ENCODE measurements at regions of chr4 and their contacts with region 1.

Region 1: DNA sequence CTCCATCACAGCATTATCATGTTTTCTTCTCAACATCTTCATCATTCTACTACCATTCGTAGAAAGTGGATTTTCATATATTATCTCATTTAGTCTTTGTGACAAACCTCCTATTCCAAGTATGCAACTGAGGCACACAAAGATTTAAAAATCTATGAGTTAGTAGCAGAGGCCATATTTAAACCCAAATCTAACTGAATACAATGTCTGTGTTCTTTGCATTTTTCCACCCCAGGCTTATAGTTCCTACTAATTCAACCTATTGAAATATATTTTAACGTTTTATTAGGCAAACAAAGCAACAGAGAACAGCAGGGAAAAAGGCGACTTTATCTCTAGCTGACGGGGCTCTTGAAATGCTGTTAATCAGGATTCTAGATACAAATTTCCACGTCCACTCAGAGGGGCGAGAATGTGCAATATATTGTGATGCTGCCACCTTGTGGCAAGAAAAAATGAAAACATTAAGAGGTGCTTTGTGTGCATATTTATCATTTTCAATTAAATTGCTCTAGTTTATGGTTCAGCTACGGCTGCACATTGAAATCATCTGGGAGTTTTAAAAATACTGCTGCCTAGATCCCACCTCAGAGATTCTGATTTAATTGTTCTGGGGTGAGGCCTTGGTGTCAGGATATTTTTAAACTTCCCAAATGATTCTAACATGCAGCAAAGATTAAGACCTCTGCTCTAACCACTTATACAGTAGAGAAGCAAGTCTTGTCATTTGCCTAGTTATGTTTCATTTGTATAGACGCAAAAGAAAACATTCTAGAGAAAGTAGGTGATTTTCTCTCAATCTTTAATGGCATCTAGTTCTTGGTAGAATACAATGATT is 315.9 kb downstream of the MAPK10 start:
- DNase-seq: peak; percentile 77
- H3K4me3 ChIP-seq: no peak overlapping the region
- H3K27ac ChIP-seq: no peak overlapping the region
- H3K4me1 ChIP-seq: no peaks in the 10 kb centered on the region
- H3K27me3 ChIP-seq: peaks cover 6 to 17% of the 10 kb centered on the region in 2 experiments
- CTCF ChIP-seq: peak; percentile 32 to 41
- POLR2A ChIP-seq: no peak

Region 2: GRCh38 chr4:85147439-85148076 is 896.4 kb before region 1 on chr4:
- CTCF ChIA-PET with region 1: interaction called, 14 read pairs
- POLR2A ChIA-PET with region 1: no interaction called
- dilution Hi-C with region 1: no loop called
- intact Hi-C with region 1: loop called (anchors 1 kb)
- DNase-seq: peak; percentile 66
- H3K4me3 ChIP-seq: no peak overlapping the region
- H3K27ac ChIP-seq: no peak overlapping the region
- H3K4me1 ChIP-seq: no peaks in the 10 kb centered on the region
- H3K27me3 ChIP-seq: peaks cover 12 to 32% of the 10 kb centered on the region in 2 experiments
- CTCF ChIP-seq: peak; percentile 38 to 44
- POLR2A ChIP-seq: no peak

Region 3: DNA sequence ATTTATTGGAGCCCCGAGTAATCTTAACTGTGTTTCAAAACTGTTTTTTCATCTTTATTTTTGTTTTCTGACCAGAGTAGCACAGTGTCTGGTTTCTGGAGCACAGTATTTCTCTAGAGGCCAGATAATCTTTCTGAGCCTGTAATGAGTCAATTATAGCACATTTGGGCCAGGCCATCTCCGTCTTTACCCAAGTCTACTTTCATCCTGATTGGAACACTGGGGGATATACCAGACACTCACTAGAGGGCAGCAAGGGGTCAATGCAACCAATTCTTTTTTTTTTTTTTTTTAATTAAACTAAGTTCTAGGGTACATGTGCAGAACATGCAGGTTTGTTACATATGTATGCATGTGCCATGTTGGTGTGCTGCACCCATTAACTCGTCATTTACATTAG is 287.0 kb before region 1 on chr4:
- CTCF ChIA-PET with region 1: interaction called, 8 read pairs
- POLR2A ChIA-PET with region 1: interaction called, 5 read pairs
- dilution Hi-C with region 1: no loop called
- intact Hi-C with region 1: loop called (anchors 1 kb)
- DNase-seq: peak; percentile 68
- H3K4me3 ChIP-seq: no peak overlapping the region
- H3K27ac ChIP-seq: no peak overlapping the region
- H3K4me1 ChIP-seq: peaks cover 22% of the 10 kb centered on the region
- H3K27me3 ChIP-seq: no peaks in the 10 kb centered on the region
- CTCF ChIP-seq: peak; percentile 38 to 57
- POLR2A ChIP-seq: no peak

Region 4: GRCh38 chr4:86032476-86033022 is 11.4 kb before region 1 on chr4:
- CTCF ChIA-PET with region 1: interaction called, 16 read pairs
- POLR2A ChIA-PET with region 1: no interaction called
- dilution Hi-C with region 1: no loop called
- intact Hi-C with region 1: no loop called
- DNase-seq: no peak
- H3K4me3 ChIP-seq: no peak overlapping the region
- H3K27ac ChIP-seq: peak overlapping the region; percentile 50
- H3K4me1 ChIP-seq: peaks cover 40% of the 10 kb centered on the region
- H3K27me3 ChIP-seq: no peaks in the 10 kb centered on the region
- CTCF ChIP-seq: no peak
- POLR2A ChIP-seq: no peak